HEK293 (cell line): ENCODE measurements at regions of chr2 and their contacts with region 1.

Region 1: DNA sequence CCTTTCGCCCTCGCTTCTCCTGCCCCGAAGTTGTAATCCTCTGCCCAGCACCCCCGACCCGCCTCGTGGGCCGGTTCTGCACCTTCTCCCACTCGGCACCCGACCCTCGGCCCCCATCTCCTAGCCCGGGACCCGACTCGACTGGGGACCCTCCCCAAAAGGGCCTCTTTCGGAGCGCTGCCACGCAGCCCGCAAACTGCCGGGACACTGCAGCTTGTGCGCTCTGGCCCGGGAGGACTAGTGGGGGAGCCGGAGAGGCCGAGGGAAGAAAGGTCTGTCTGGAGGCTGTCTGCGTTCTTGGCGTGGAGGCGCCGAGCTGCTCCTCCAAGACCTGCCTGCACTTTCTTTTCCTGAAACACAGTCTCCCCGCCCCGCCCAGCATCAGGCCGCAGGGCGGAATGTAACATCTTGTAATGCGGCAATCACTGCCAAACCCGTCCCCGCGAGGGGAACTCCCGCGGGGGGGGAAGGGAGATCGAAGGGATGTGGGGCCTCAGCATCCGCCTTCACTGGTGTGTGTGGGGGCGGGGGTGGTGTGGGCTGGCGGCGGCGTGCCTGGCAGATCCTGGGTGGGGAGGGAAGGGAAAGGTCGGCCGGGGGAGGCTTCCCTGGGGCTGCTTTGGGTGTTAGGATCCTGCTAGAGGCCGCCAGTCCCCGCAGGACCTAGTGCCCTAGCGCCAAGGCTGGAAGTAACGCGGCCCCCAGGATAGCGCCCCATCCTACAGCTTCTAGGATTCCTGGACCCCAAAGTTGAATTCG is 7.4 kb downstream of the DLX2 start:
- H3K4me3 ChIP-seq: peak overlapping the region; percentile 83
- H3K27ac ChIP-seq: peak overlapping the region; percentile 99
- H3K4me1 ChIP-seq: peaks cover 12% of the 10 kb centered on the region
- CTCF ChIP-seq: peak; percentile 9; the same call in 1 of the 2 replicates

Region 2: GRCh38 chr2:171893824-171894611 is 201.3 kb before region 1 on chr2 and contains the start of gene SLC25A12:
- CTCF ChIA-PET with region 1: no interaction called
- POLR2A ChIA-PET with region 1: interaction called, 13 read pairs
- H3K4me3 ChIP-seq: peak within 1 kb of the TSS; percentile 86
- H3K27ac ChIP-seq: peak within 1 kb of the TSS; percentile 73
- H3K4me1 ChIP-seq: no peaks in the 10 kb centered on the region
- CTCF ChIP-seq: peak; percentile 33; the same call in 1 of the 2 replicates

Region 3: DNA sequence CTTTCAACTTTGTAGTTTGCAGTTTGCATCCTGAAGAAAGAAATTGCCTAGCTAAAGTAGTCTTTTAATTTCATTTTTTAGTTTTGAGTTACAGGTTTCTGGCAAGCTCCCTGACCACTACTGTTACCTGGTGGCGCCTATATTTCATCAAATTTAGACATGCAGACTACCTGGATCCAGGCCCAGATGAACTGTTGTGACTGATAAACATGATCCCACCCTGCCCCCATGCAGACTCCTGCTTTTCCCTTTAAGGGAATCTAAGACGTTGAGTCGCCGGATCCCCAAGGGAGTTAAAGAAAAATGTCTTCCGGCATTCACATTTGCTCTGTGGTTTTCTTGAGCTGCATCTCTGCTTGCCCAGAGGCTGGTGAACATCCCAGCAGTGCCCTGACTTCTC is 73.4 kb before region 1 on chr2:
- CTCF ChIA-PET with region 1: no interaction called
- POLR2A ChIA-PET with region 1: interaction called, 21 read pairs
- H3K4me3 ChIP-seq: peak overlapping the region; percentile 11
- H3K27ac ChIP-seq: peak overlapping the region; percentile 81
- H3K4me1 ChIP-seq: peaks cover 14% of the 10 kb centered on the region
- CTCF ChIP-seq: no peak

Region 4: GRCh38 chr2:172038604-172039003 is 56.7 kb before region 1 on chr2:
- CTCF ChIA-PET with region 1: no interaction called
- POLR2A ChIA-PET with region 1: interaction called, 10 read pairs
- H3K4me3 ChIP-seq: no peak overlapping the region
- H3K27ac ChIP-seq: peak overlapping the region; percentile 53
- H3K4me1 ChIP-seq: peaks cover 11% of the 10 kb centered on the region
- CTCF ChIP-seq: no peak

Region 5: DNA sequence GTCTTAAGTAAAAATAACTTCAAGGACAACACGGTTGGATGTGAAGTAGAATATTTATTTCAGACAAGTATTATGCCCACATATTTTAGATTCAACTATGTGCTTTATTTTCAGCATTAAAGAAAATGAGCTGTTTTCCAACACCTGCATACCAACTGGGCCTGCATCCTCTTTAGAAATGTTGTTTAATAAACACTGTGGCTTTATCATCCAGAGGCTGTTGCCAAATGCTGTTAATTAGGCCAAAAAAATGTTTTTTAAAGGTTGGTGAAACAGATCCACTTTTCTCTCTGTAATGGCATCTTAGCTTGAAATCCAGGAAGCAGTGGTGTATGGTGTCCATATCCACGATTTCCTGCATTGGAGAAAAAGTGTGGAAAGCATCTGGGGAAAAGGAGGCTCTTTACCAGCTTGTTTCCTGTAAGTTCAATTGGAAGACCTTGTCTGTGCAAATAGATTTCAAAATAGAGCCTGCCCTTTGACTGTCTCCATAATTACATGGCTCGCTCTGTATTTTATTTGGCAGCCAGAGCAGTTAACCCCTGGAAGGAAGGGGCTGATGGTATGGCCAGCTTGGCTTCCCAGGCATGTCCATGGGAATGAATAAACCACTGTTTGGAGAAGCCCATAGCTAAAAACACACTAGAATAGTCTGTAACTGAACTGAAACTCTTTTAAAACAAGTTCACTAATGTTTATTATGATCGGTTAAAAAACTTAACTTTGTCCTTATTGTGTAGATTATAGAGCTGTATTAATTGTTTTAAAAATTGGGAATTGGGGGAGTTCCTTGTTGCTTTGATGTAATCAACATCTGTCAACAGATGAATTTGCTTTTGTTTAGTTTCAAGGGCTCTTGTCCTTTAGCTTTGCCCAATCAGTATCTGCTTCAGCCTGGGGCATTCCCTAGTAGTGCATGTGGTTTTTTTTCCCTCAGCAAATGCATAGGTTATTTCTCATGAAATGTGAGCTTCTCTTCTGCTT is 43.0 kb before region 1 on chr2:
- CTCF ChIA-PET with region 1: interaction called, 3 read pairs
- POLR2A ChIA-PET with region 1: interaction called, 16 read pairs
- H3K4me3 ChIP-seq: no peak overlapping the region
- H3K27ac ChIP-seq: peak overlapping the region; percentile 18
- H3K4me1 ChIP-seq: peaks cover 14% of the 10 kb centered on the region
- CTCF ChIP-seq: no peak

Region 6: GRCh38 chr2:172084734-172085459 is 10.4 kb before region 1 on chr2:
- CTCF ChIA-PET with region 1: interaction called, 9 read pairs
- POLR2A ChIA-PET with region 1: interaction called, 147 read pairs
- H3K4me3 ChIP-seq: peak overlapping the region; percentile 58
- H3K27ac ChIP-seq: peak overlapping the region; percentile 95
- H3K4me1 ChIP-seq: no peaks in the 10 kb centered on the region; the same call in 1 of the 2 replicates
- CTCF ChIP-seq: peak; percentile 81

Region 7: GRCh38 chr2:172253190-172254052 is 158.1 kb after region 1 on chr2:
- CTCF ChIA-PET with region 1: no interaction called
- POLR2A ChIA-PET with region 1: no interaction called
- H3K4me3 ChIP-seq: no peak overlapping the region
- H3K27ac ChIP-seq: no peak overlapping the region
- H3K4me1 ChIP-seq: no peaks in the 10 kb centered on the region; the same call in 1 of the 2 replicates
- CTCF ChIP-seq: no peak